BJ (cell line): ENCODE measurements at regions of chr1 and their contacts with region 1.

Region 1: GRCh38 chr1:206905280-206906164 is 8.3 kb downstream of the IL24 start:
- DNase-seq: peak; percentile 83
- H3K4me3 ChIP-seq: no peak overlapping the region
- H3K27me3 ChIP-seq: no peaks in the 10 kb centered on the region
- CTCF ChIP-seq: peak; percentile 10; the same call in 1 of the 2 replicates

Region 2: GRCh38 chr1:206865013-206865671 is 40.4 kb before region 1 on chr1 and contains the start of gene IL20:
- CTCF ChIA-PET with region 1: interaction called, 32 read pairs
- POLR2A ChIA-PET with region 1: no interaction called
- DNase-seq: no peak
- H3K4me3 ChIP-seq: no peak within 1 kb of the TSS
- H3K27me3 ChIP-seq: peaks cover 7% of the 10 kb centered on the region; the same call in 1 of the 2 replicates
- CTCF ChIP-seq: peak; percentile 92
- polyA plus RNA-seq, gene IL20: not detected in 2 replicates

Region 3: GRCh38 chr1:207025144-207025880 is 119.8 kb after region 1 on chr1:
- CTCF ChIA-PET with region 1: no interaction called
- POLR2A ChIA-PET with region 1: interaction called, 13 read pairs
- DNase-seq: no peak
- H3K4me3 ChIP-seq: no peak overlapping the region
- H3K27me3 ChIP-seq: no peaks in the 10 kb centered on the region
- CTCF ChIP-seq: no peak